Stomach (tissue), 19 donors: ENCODE measurements at regions of chr9 and their contacts with region 1.

Region 1: GRCh38 chr9:130712564-130713285 is 19.1 kb downstream of the EXOSC2 start:
- DNase-seq: peak; percentile 99
- H3K4me3 ChIP-seq: peak overlapping the region; percentile 71 to 96 (median 92)
- H3K27ac ChIP-seq: peak overlapping the region; percentile 93 to 99 (median 99)
- H3K4me1 ChIP-seq: peaks cover 22 to 54% (median 43%) of the 10 kb centered on the region in 4 donors
- H3K27me3 ChIP-seq: no peaks in the 10 kb centered on the region
- CTCF ChIP-seq: no peak
- EP300 ChIP-seq: no peak
- POLR2A ChIP-seq: no peak

Region 2: GRCh38 chr9:130834371-130835311 is 121.9 kb after region 1 on chr9 and contains the start of gene ABL1:
- intact Hi-C with region 1: loop called (anchors 10 kb)
- DNase-seq: peak; percentile 77 to 91
- H3K4me3 ChIP-seq: peak within 1 kb of the TSS; percentile 60 to 72 (median 68)
- H3K27ac ChIP-seq: peak within 1 kb of the TSS; percentile 89 to 98 (median 96)
- H3K4me1 ChIP-seq: peaks cover 36 to 70% (median 50%) of the 10 kb centered on the region in 4 donors
- H3K27me3 ChIP-seq: no peaks in the 10 kb centered on the region
- CTCF ChIP-seq: no peak
- EP300 ChIP-seq: no peak
- POLR2A ChIP-seq: no peak
- total RNA-seq, gene ABL1: 36.2 to 95.9 (median 61.4) TPM

Region 3: DNA sequence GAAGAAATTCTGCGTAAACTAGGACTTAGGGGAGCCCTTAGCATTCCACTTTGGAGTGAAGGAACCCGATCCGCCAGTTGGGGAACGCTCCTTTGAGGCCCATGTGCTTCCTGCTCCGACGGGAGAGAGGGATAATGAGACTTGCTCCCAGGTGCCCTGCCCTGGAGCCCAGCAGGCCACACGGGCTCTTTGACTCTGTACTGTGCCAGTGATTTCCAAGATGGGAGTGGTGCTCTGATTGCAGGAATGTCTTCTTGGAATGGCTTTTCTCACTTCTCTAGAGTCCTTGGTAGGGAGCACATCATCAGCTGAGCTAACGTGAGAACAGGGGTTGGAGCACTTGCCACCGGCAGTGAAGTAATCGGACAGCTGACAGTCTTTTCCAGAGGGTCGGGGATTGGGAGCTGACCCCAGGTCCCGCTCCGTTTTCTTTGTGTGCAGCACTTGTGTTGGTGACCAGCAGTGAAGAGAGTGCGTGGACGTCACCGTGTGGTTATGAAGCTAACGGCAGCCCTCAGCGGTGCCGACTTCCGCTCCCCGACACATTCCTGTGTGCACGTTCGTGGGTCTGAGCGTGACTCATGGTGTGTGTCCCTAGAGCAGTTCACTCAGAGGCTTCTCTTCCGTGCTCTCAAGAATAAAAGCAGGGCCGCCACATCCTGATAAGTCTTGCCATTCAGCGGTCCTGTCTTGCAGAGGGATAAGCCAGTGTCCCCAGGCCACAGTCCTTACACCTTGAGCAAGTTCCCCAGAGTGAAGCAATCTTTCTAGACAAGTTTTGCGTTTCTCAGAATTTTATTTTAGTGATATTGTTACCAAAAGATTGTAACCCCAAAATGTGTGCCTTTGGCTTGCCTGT is 148.0 kb after region 1 on chr9:
- intact Hi-C with region 1: loop called (anchors 5 kb)
- DNase-seq: peak; percentile 65 to 86
- H3K4me3 ChIP-seq: no peak overlapping the region
- H3K27ac ChIP-seq: peak overlapping the region; percentile 27 to 85 (median 75)
- H3K4me1 ChIP-seq: peaks cover 8 to 82% (median 41%) of the 10 kb centered on the region in 4 donors
- H3K27me3 ChIP-seq: no peaks in the 10 kb centered on the region
- CTCF ChIP-seq: peak in 3 of 7 experiments; percentile 23 to 29 (median 26)
- EP300 ChIP-seq: no peak
- POLR2A ChIP-seq: no peak